ENCODE measurements at regions of chr6 and their contacts with region 1.

Region 1: DNA sequence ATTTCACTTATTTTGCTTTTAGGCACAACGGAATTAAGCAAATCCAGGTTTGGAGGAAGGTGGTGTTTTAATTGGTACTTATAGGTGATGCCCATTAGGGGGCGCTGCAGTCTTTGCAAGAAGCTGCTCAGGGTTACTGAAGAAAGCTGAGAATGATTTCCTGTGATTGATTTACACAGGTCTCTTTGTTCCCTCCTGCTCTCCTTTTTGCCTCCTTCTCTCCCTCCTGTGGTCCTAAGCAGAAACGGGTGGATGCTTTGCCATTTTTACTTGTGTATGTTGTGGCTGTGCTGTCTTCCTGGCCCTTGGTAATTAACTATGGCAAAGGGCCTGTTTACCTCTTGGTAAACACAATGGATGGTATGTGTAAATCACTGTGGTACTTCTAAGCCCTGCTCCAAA is 97.8 kb downstream of the ANKS1A start:
- DNase-seq: peak; percentile 81
- H3K4me3 ChIP-seq: no peak overlapping the region
- H3K27ac ChIP-seq: peak overlapping the region; percentile 8
- H3K4me1 ChIP-seq: peaks cover 9% of the 10 kb centered on the region
- H3K27me3 ChIP-seq: no peaks in the 10 kb centered on the region
- CTCF ChIP-seq: peak; percentile 64 to 68
- POLR2A ChIP-seq: no peak

Region 2: GRCh38 chr6:34887753-34888513 is 98.9 kb before region 1 on chr6 and contains the start of gene TAF11:
- CTCF ChIA-PET with region 1: interaction called, 10 read pairs
- POLR2A ChIA-PET with region 1: no interaction called
- dilution Hi-C with region 1: no loop called
- intact Hi-C with region 1: loop called (anchors 2 kb)
- DNase-seq: peak; percentile 93
- H3K4me3 ChIP-seq: peak within 1 kb of the TSS; percentile 80 to 96 (median 87)
- H3K27ac ChIP-seq: peak within 1 kb of the TSS; percentile 82
- H3K4me1 ChIP-seq: peaks cover 14% of the 10 kb centered on the region
- H3K27me3 ChIP-seq: no peaks in the 10 kb centered on the region
- CTCF ChIP-seq: no peak
- POLR2A ChIP-seq: peak; percentile 83
- total RNA-seq, gene TAF11: 37.1 and 41.0 TPM in 2 replicates

Region 3: DNA sequence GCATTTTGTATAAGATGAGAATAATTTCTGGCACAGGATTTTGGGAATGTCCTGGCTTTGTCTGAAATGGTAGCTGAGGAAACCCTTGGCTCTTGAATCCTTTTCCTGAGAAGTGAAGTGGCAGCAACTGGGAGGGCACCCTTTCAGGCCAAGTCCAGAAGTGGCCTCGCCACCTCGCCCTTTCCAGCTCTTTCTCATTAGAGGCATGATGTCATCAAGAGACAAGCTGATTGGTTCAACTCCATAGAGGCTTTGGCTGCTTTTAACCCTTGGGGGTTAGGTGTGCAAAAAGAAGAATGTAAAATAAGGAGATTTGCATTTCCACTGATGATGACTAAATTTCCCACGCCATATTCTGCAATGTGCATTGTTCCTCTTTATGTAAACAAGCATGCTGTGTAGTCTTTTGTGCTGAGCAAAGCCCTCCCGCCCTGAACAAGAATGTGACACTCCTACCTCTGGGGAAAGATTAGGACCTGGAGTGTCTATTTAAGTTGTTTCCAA is 37.8 kb after region 1 on chr6:
- CTCF ChIA-PET with region 1: interaction called, 17 read pairs
- POLR2A ChIA-PET with region 1: no interaction called
- dilution Hi-C with region 1: no loop called
- intact Hi-C with region 1: no loop called
- DNase-seq: peak; percentile 92
- H3K4me3 ChIP-seq: no peak overlapping the region
- H3K27ac ChIP-seq: peak overlapping the region; percentile 69
- H3K4me1 ChIP-seq: peaks cover 43% of the 10 kb centered on the region
- H3K27me3 ChIP-seq: no peaks in the 10 kb centered on the region
- CTCF ChIP-seq: no peak
- POLR2A ChIP-seq: peak; percentile 17

Region 4: DNA sequence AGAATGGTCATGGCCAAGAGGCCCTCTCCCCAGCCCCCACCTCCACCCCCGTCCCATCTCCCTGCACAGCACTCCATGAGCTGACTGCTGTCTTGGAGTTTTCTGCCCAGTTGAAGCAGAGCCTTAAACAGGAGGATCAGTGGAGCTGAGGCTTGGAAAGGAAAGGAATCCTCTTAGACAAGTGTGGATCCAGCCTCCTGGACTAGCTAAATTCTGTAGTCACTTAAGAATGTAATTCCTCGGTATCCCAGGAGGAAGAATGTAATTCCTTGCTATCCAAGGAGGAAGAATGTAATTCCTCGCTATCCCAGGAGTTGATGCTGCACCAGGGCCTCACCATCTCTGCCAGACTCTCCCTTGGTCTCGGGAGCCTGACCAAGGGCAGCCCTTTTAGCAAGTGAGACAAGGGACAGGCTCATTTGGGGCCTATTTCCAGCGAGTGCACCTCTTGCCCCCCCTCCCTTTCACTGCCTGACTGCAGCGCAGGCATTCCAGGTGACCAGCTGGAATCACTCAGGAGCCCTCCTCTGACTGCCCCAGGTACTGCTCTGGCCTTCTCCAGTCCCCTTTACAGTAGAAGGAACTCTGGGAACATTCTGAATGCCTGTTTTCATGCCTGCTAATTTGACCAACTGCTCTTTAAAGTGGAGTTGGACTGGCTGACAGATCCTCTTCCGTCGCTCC is 78.1 kb after region 1 on chr6:
- CTCF ChIA-PET with region 1: interaction called, 16 read pairs
- POLR2A ChIA-PET with region 1: no interaction called
- dilution Hi-C with region 1: no loop called
- intact Hi-C with region 1: loop called (anchors 5 kb)
- DNase-seq: no peak
- H3K4me3 ChIP-seq: no peak overlapping the region
- H3K27ac ChIP-seq: no peak overlapping the region
- H3K4me1 ChIP-seq: peaks cover 9% of the 10 kb centered on the region
- H3K27me3 ChIP-seq: no peaks in the 10 kb centered on the region
- CTCF ChIP-seq: no peak
- POLR2A ChIP-seq: no peak

Region 5: GRCh38 chr6:35096129-35096862 is 109.5 kb after region 1 on chr6:
- CTCF ChIA-PET with region 1: interaction called, 16 read pairs
- POLR2A ChIA-PET with region 1: no interaction called
- dilution Hi-C with region 1: no loop called
- intact Hi-C with region 1: no loop called
- DNase-seq: peak; percentile 84
- H3K4me3 ChIP-seq: no peak overlapping the region
- H3K27ac ChIP-seq: peak overlapping the region; percentile 42
- H3K4me1 ChIP-seq: peaks cover 12% of the 10 kb centered on the region
- H3K27me3 ChIP-seq: no peaks in the 10 kb centered on the region
- CTCF ChIP-seq: no peak
- POLR2A ChIP-seq: no peak

Region 6: GRCh38 chr6:35146453-35146852 is 159.6 kb after region 1 on chr6:
- CTCF ChIA-PET with region 1: interaction called, 302 read pairs
- POLR2A ChIA-PET with region 1: no interaction called
- dilution Hi-C with region 1: no loop called
- intact Hi-C with region 1: no loop called
- DNase-seq: peak; percentile 47
- H3K4me3 ChIP-seq: no peak overlapping the region
- H3K27ac ChIP-seq: no peak overlapping the region
- H3K4me1 ChIP-seq: peaks cover 11% of the 10 kb centered on the region
- H3K27me3 ChIP-seq: no peaks in the 10 kb centered on the region
- CTCF ChIP-seq: peak; percentile 51 to 70
- POLR2A ChIP-seq: no peak

Measured in endothelial cell of umbilical vein (primary cell).